Heart left ventricle (tissue), 16 donors: ENCODE measurements at regions of chr5 and their contacts with region 1.

Region 1: DNA sequence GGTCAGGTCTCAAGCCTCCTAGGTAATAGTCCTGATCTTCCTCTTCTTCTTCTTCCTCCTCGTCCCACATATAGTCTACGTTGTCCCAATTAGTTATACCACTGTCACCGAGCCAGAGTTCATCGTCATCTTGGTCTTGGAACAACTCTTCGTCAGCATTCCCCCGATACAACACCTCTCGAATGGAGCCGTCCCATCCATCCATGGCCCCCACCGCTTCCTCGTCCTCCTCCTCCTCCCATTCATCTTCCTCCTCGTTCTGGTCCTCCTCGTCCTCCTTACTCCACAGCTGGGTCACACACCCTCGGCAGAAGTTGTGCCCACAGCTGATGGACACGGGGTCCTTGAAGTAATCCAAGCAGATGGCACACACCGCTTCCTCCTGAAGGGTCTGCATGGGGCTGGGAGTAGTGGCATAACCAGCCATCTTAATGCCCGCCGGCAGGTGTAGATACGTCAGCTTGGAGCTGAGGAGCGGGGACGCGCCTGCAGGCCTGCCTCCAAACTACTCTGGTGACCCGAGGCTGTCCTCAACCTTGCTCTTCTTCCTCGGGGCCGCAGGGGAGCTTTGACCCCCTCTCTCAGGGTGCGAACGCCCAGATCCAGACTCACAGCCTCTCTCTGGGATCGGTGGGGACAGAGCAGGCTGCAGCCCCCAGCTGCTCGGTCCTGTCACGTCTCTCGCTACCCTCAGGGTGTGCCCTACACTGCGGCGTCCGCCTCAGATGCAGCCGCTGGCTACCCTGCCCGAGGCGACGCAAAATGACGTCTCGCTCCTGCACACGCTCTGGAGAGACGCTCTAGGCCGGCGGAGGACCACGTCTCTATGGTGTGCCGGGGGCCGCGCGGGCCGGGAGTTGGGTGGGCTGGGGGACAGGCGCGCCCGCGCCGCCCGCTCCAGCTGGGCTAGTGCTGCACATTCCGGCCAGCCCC is at the start of gene TRIM52:
- DNase-seq: peak; percentile 92 to 96 (median 95)
- ATAC-seq: peak; percentile 88 to 95 (median 92)
- H3K4me3 ChIP-seq: peak within 1 kb of the TSS; percentile 69 to 100 (median 93)
- H3K27ac ChIP-seq: peak within 1 kb of the TSS; percentile 92 to 100 (median 98)
- H3K4me1 ChIP-seq: peaks cover 5 to 62% (median 47%) of the 10 kb centered on the region in 12 donors
- H3K27me3 ChIP-seq: no peaks in the 10 kb centered on the region
- CTCF ChIP-seq: no peak
- POLR2A ChIP-seq: peak; percentile 45 to 76
- total RNA-seq, gene TRIM52: 5.6 to 12.8 (median 7.6) TPM

Region 2: GRCh38 chr5:181181650-181182565 is 78.7 kb before region 1 on chr5:
- intact Hi-C with region 1: loop called in 5 of 10 experiments (anchors 5 kb)
- DNase-seq: peak; percentile 68 to 79 (median 71)
- ATAC-seq: peak; percentile 72 to 87 (median 86)
- H3K4me3 ChIP-seq: no peak overlapping the region
- H3K27ac ChIP-seq: no peak overlapping the region
- H3K4me1 ChIP-seq: peaks cover 0 to 24% (median 5%) of the 10 kb centered on the region in 12 donors
- H3K27me3 ChIP-seq: peaks cover 0 to 3% (median 0%) of the 10 kb centered on the region in 9 donors
- CTCF ChIP-seq: peak; percentile 67 to 86 (median 80)
- POLR2A ChIP-seq: no peak

Region 3: DNA sequence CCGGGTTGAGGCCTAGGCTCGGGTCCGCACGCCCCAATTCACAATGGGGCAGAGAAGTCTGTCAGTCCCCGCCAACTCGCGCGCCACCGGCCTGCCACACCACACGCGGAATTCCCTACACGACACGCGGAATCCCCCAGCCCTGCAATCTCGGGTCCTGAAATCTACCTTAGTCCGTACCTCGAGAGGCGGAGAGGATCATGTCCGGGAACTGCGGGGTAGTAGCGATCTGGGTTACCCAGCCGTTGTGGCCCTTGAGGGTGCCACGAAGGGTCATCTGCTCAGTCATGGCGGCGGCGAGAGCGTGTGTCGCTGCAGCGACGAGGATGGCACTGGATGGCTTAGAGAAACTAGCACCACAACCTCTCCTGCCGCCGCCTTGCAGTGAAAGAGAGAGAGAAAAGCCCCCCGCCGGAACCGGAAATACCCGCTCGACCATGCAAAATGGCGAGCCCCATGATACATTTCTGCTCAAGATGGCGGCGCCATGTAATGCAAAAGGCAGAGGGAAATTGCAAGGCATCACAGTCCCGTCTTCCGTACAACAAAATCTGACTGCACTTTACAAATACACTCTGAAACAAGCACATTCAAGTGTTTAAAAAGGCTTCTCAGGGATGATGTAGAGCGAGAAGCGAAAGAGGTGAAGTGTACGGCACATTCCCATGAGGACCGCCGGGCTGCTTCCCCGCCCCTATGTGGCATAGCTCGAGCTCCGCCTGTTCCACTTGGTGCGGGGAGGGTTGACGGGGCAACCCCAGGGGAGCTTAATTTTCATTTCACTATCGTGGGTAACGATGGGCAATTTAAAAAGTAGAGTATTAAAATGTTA is 16.9 kb before region 1 on chr5 and contains the start of gene RACK1:
- intact Hi-C with region 1: loop called in 4 of 10 experiments (anchors 2 kb)
- DNase-seq: peak; percentile 90 to 93 (median 92)
- ATAC-seq: peak; percentile 67 to 75 (median 70)
- H3K4me3 ChIP-seq: peak within 1 kb of the TSS; percentile 68 to 90 (median 80)
- H3K27ac ChIP-seq: peak within 1 kb of the TSS; percentile 83 to 99 (median 95)
- H3K4me1 ChIP-seq: peaks cover 3 to 74% (median 47%) of the 10 kb centered on the region in 12 donors
- H3K27me3 ChIP-seq: no peaks in the 10 kb centered on the region
- CTCF ChIP-seq: no peak
- POLR2A ChIP-seq: peak in 1 of 2 donors; percentile 63
- total RNA-seq, gene RACK1: 560 to 1,237 (median 771) TPM